Activated CD8-positive, alpha-beta T cell treated with anti-CD3 and anti-CD28 coated beads for 36 hours (primary cell): ENCODE measurements at regions of chr5 and their contacts with region 1.

Region 1: GRCh38 chr5:35884115-35884788 is 27.6 kb downstream of the IL7R start:
- DNase-seq: no peak
- ATAC-seq: peak; percentile 81
- H3K4me3 Mint-ChIP-seq: peak overlapping the region; percentile 9
- H3K27ac Mint-ChIP-seq: peak overlapping the region; percentile 90
- H3K4me1 Mint-ChIP-seq: peaks cover 46% of the 10 kb centered on the region
- H3K27me3 Mint-ChIP-seq: no peaks in the 10 kb centered on the region
- CTCF ChIP-seq: no peak

Region 2: GRCh38 chr5:35657877-35658276 is 226.4 kb before region 1 on chr5:
- CTCF ChIA-PET with region 1: no interaction called
- POLR2A ChIA-PET with region 1: no interaction called
- intact Hi-C with region 1: no loop called
- DNase-seq: no peak
- ATAC-seq: no peak
- H3K4me3 Mint-ChIP-seq: no peak overlapping the region
- H3K27ac Mint-ChIP-seq: peak overlapping the region; percentile 5
- H3K4me1 Mint-ChIP-seq: peaks cover 24% of the 10 kb centered on the region
- H3K27me3 Mint-ChIP-seq: no peaks in the 10 kb centered on the region
- CTCF ChIP-seq: no peak

Region 3: DNA sequence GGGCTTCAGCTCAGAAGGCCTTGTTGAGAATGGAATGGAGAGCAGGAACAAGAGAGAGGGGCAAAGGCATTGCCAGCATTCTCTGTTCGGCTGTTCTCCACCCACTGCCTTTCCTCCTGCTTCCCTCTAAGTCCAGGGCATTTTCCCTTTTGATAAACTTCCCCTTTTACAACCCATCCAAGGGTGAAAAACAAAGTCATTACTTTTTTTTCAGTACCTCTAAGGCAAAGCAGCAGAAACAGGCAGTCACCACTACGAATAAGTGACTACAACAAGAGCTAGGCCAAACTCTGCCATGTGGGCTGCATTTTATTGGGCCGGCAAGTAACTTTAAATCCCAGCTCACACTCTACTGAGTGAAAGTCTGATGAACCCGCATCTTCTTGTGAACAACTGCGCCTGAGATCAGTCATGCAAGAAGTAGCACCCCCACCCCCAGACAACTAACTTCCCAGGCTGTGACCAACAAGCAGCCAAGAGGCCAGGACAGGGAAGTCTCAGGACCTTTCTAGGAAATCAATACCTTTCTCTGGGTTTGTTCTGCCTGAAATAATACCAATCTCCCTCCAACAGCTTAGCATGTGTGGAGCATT is 14.5 kb before region 1 on chr5:
- CTCF ChIA-PET with region 1: interaction called, 9 read pairs
- POLR2A ChIA-PET with region 1: interaction called, 12 read pairs
- intact Hi-C with region 1: no loop called
- DNase-seq: no peak
- ATAC-seq: peak; percentile 28
- H3K4me3 Mint-ChIP-seq: no peak overlapping the region
- H3K27ac Mint-ChIP-seq: peak overlapping the region; percentile 71
- H3K4me1 Mint-ChIP-seq: peaks cover 82% of the 10 kb centered on the region
- H3K27me3 Mint-ChIP-seq: no peaks in the 10 kb centered on the region
- CTCF ChIP-seq: no peak

Region 4: GRCh38 chr5:35902046-35902676 is 17.9 kb after region 1 on chr5:
- CTCF ChIA-PET with region 1: interaction called, 7 read pairs
- POLR2A ChIA-PET with region 1: interaction called, 34 read pairs
- intact Hi-C with region 1: no loop called
- DNase-seq: peak; percentile 51
- ATAC-seq: peak; percentile 61
- H3K4me3 Mint-ChIP-seq: no peak overlapping the region
- H3K27ac Mint-ChIP-seq: peak overlapping the region; percentile 60
- H3K4me1 Mint-ChIP-seq: peaks cover 86% of the 10 kb centered on the region
- H3K27me3 Mint-ChIP-seq: no peaks in the 10 kb centered on the region
- CTCF ChIP-seq: no peak